Activated CD4-positive, alpha-beta T cell treated with anti-CD3 and anti-CD28 coated beads for 36 hours (primary cell): ENCODE measurements at regions of chrX and their contacts with region 1.

Region 1: DNA sequence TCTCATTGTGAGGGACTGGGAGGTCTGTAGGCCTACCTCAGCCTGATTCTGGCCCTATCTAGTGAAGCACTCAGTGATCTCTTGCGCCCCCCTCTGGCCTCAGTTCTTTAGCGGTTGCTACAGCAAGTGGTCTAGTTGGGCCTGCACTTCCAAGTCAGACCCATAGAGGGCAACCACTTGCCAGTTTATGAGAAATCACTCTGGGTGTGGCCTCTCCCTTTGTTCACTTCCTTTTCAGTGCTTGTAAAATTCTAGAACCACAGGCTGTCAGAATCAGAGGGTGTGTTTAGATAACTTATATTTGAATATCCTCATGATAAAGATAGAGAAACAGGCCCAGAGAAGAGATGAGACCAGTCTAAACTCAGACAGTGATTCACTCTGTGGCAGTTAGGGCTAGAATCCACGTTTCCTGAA is 60.9 kb upstream of the LAS1L start:
- DNase-seq: peak; percentile 96
- ATAC-seq: peak; percentile 81
- H3K4me3 Mint-ChIP-seq: peak overlapping the region; percentile 47
- H3K27ac Mint-ChIP-seq: peak overlapping the region; percentile 94
- H3K4me1 Mint-ChIP-seq: peaks cover 55% of the 10 kb centered on the region
- H3K27me3 Mint-ChIP-seq: no peaks in the 10 kb centered on the region

Region 2: GRCh38 chrX:65607070-65607742 is 11.7 kb after region 1 on chrX:
- CTCF ChIA-PET with region 1: interaction called, 12 read pairs
- POLR2A ChIA-PET with region 1: interaction called, 5 read pairs
- intact Hi-C with region 1: loop called in 1 of 2 experiments (anchors 1 kb)
- DNase-seq: peak; percentile 46
- ATAC-seq: peak; percentile 98
- H3K4me3 Mint-ChIP-seq: no peak overlapping the region
- H3K27ac Mint-ChIP-seq: peak overlapping the region; percentile 90
- H3K4me1 Mint-ChIP-seq: peaks cover 65% of the 10 kb centered on the region
- H3K27me3 Mint-ChIP-seq: no peaks in the 10 kb centered on the region

Region 3: DNA sequence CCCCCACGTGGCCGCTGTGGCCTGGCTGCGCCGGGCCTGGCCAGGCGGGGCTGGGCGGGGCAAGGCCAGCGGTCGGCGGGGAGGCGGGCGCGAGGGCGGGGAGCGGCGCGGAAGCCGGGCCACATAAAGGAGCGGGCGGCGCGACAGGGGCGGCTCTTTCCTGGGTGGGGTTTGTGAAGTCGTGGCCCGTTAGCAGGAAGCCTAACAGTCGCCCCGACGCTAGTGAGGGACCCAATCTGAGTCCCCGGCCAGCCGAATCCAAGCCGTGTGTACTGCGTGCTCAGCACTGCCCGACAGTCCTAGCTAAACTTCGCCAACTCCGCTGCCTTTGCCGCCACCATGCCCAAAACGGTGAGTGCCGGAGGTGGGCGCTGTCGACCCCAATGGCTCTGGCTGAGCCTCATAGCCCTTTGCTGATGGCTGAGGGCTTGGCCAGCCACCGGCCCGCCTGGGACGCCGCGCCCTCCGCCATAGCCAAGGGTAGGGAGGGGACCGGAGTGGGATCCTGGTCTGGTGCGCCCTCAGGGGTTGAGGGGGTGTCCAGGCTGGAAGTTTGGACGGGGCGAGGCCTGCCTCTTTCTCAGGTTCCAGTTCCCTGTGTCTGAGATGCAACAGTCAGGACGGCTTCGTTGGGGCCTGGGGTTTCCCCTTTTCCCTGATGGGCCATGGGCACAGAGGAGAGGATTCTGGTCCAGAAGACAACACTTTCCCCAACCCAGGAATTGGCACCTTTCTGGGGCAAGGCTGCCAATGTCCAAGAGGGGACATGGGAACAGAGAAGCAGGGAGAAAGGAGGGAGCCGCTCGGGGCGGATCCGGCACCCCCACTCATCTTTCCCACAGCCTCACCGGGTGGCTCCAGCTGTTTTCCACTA is 72.3 kb after region 1 on chrX and contains the start of gene MSN:
- CTCF ChIA-PET with region 1: interaction called, 3 read pairs
- POLR2A ChIA-PET with region 1: interaction called, 8 read pairs
- intact Hi-C with region 1: loop called (anchors 1 kb)
- DNase-seq: peak; percentile 87
- ATAC-seq: peak; percentile 67
- H3K4me3 Mint-ChIP-seq: peak within 1 kb of the TSS; percentile 91
- H3K27ac Mint-ChIP-seq: peak within 1 kb of the TSS; percentile 96
- H3K4me1 Mint-ChIP-seq: peaks cover 28% of the 10 kb centered on the region
- H3K27me3 Mint-ChIP-seq: no peaks in the 10 kb centered on the region
- total RNA-seq, gene MSN: 476 to 609 TPM

Region 4: DNA sequence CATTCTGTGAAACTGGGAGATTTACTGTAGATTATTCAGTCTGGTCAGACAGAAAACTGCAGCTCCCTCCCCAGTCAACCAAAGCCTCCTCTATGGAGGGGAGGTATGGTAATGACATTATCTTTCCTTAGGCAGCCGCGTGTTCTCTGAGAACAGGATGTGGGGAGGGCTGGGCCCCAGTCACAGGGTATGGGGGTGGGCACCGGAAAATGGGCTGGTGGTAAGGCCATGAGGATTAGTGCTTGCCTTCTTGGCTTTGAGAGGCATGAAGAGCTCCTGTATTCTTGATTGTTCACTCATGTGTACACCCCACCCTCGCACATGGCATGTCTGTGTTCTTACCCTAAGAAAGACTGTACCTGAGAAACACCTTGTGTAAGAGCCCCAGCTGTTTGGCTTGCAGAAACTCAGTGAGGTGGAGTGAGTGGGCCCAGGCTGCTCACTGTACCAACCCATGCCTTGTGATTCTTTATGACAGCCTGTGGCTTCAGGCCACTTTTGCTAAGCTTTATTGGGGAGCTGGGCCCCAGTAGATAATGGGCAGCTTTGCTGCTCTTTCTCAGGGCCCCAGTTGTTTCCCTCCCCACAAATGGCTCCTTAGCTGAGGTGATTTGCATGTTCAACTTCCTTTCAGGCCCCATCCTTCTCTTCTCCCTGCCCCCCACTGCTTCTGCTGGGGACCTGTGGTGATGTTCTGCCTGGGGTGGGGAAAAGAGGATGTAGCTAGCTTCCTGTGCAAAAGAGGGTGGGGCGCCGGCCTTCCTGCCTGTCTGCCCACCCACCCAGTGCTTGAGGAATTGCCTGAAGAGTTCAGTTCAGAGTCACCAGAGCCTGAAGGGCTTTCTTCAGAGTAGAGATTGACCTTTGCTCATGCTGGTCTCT is 102.7 kb after region 1 on chrX:
- CTCF ChIA-PET with region 1: interaction called, 4 read pairs
- POLR2A ChIA-PET with region 1: no interaction called
- intact Hi-C with region 1: loop called in 1 of 2 experiments (anchors 1 kb)
- DNase-seq: peak; percentile 83
- ATAC-seq: peak; percentile 76
- H3K4me3 Mint-ChIP-seq: peak overlapping the region; percentile 48
- H3K27ac Mint-ChIP-seq: peak overlapping the region; percentile 98
- H3K4me1 Mint-ChIP-seq: peaks cover 87% of the 10 kb centered on the region
- H3K27me3 Mint-ChIP-seq: no peaks in the 10 kb centered on the region

Region 5: GRCh38 chrX:65723706-65724105 is 128.2 kb after region 1 on chrX:
- CTCF ChIA-PET with region 1: interaction called, 6 read pairs
- POLR2A ChIA-PET with region 1: interaction called, 8 read pairs
- intact Hi-C with region 1: loop called (anchors 1 to 5 kb)
- DNase-seq: peak; percentile 60
- ATAC-seq: peak; percentile 86
- H3K4me3 Mint-ChIP-seq: peak overlapping the region; percentile 19
- H3K27ac Mint-ChIP-seq: peak overlapping the region; percentile 88
- H3K4me1 Mint-ChIP-seq: peaks cover 87% of the 10 kb centered on the region
- H3K27me3 Mint-ChIP-seq: no peaks in the 10 kb centered on the region

Region 6: GRCh38 chrX:65932176-65933084 is 337.0 kb after region 1 on chrX:
- CTCF ChIA-PET with region 1: no interaction called
- POLR2A ChIA-PET with region 1: no interaction called
- intact Hi-C with region 1: loop called in 1 of 2 experiments (anchors 5 kb)
- DNase-seq: peak; percentile 57
- ATAC-seq: peak; percentile 98
- H3K4me3 Mint-ChIP-seq: no peak overlapping the region
- H3K27ac Mint-ChIP-seq: peak overlapping the region; percentile 53
- H3K4me1 Mint-ChIP-seq: peaks cover 13% of the 10 kb centered on the region
- H3K27me3 Mint-ChIP-seq: no peaks in the 10 kb centered on the region

Region 7: GRCh38 chrX:66046612-66047235 is 451.3 kb after region 1 on chrX:
- CTCF ChIA-PET with region 1: interaction called, 4 read pairs
- POLR2A ChIA-PET with region 1: no interaction called
- intact Hi-C with region 1: loop called (anchors 1 to 10 kb)
- DNase-seq: peak; percentile 62
- ATAC-seq: peak; percentile 28
- H3K4me3 Mint-ChIP-seq: peak overlapping the region; percentile 66
- H3K27ac Mint-ChIP-seq: peak overlapping the region; percentile 99
- H3K4me1 Mint-ChIP-seq: peaks cover 31% of the 10 kb centered on the region
- H3K27me3 Mint-ChIP-seq: no peaks in the 10 kb centered on the region